Tibial artery (tissue), 4 donors: ENCODE measurements at regions of chr4 and their contacts with region 1.

Region 1: DNA sequence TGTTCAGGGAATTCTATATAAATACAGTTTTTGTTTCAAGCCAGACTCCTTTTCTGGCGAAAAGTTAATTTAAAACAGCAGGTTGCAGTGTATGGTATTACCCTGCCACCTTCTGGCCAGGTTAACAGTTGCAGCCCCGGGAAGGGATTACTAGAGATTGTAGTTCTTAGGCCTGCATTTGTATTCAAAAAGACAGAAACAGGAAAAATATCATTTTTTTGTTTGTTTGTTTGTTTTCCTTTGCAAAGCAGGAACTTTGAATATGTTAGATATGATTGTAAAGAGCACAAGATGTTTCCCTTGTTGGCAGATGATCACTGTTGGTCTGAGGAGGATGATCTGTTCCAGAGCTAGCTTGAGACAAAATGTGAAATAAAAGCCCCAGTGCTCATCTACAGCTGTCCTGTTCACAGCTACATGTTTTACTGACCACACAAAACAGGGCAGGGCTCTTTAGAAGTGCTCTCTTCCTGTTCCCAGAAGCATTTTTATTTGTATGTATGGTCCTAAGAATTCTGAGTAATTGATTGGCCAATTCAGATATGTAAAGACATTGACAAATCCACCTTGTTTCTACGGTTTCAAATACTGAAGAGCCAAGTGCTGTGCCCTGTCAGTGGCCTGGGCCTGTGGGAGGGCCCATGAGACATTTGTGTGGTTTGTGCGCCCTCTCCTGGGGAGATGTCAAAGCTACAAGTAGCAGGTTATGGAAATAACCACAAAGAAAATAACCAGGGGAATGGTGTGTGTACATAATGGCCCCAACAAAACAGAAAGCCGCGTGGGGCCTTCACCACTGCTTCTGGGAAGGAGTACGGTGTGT is 57.9 kb downstream of the CLDN22 start:
- DNase-seq: peak; percentile 78 to 86
- H3K4me3 ChIP-seq: no peak overlapping the region
- H3K27ac ChIP-seq: peak overlapping the region; percentile 20 to 26
- H3K4me1 ChIP-seq: peaks cover 0 to 6% (median 0%) of the 10 kb centered on the region in 4 donors
- H3K27me3 ChIP-seq: no peaks in the 10 kb centered on the region
- CTCF ChIP-seq: peak; percentile 72 to 76

Region 2: DNA sequence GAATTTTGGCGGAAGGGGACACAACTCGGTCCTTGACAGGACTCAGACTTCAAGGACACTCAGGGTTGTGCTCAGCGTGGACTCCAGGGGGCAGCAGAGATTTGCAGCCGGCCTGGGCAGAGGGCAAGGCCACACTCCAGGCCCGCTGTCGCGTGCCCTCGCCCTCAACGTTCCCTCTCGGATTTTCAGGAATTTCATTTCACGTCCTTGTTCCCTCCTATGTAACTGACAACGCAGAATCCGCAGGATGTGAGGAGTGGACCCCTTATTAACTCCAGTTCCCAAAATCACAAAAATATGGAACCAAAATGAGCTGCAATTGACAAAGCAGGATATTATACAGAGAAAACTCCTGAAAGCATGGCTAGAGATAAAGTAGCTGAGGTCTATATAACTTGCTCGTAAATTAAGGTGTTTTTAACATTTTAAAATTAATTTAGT is 323.9 kb before region 1 on chr4:
- intact Hi-C with region 1: loop called (anchors 2 kb)
- DNase-seq: peak; percentile 61 to 79
- H3K4me3 ChIP-seq: no peak overlapping the region
- H3K27ac ChIP-seq: no peak overlapping the region
- H3K4me1 ChIP-seq: no peaks in the 10 kb centered on the region
- H3K27me3 ChIP-seq: peaks cover 0 to 6% of the 10 kb centered on the region in 2 donors
- CTCF ChIP-seq: peak; percentile 80 to 94

Region 3: GRCh38 chr4:183073838-183074145 is 188.4 kb before region 1 on chr4:
- intact Hi-C with region 1: loop called (anchors 2 kb)
- DNase-seq: no peak
- H3K4me3 ChIP-seq: no peak overlapping the region
- H3K27ac ChIP-seq: no peak overlapping the region
- H3K4me1 ChIP-seq: no peaks in the 10 kb centered on the region
- H3K27me3 ChIP-seq: no peaks in the 10 kb centered on the region
- CTCF ChIP-seq: no peak